GM10248 (cell line): ENCODE measurements at regions of chr4 and their contacts with region 1.

Region 1: GRCh38 chr4:6768539-6768905 is 14.0 kb upstream of the KIAA0232 start:
- DNase-seq: no peak
- CTCF ChIP-seq: no peak

Region 2: GRCh38 chr4:6516762-6517570 is 251.6 kb before region 1 on chr4:
- CTCF ChIA-PET with region 1: no interaction called
- POLR2A ChIA-PET with region 1: no interaction called
- DNase-seq: no peak
- CTCF ChIP-seq: no peak

Region 3: GRCh38 chr4:6783053-6783981 is 14.8 kb after region 1 on chr4:
- CTCF ChIA-PET with region 1: interaction called, 13 read pairs
- POLR2A ChIA-PET with region 1: interaction called, 3 read pairs
- DNase-seq: peak; percentile 96
- CTCF ChIP-seq: peak; percentile 22